Transverse colon (tissue), 4 donors: ENCODE measurements at regions of chr11 and their contacts with region 1.

Region 1: GRCh38 chr11:64152841-64153691 is 12.8 kb downstream of the MACROD1 start:
- DNase-seq: peak; percentile 71
- H3K4me3 ChIP-seq: no peak overlapping the region
- H3K27ac ChIP-seq: no peak overlapping the region
- H3K4me1 ChIP-seq: peaks cover 4 to 15% (median 6%) of the 10 kb centered on the region in 4 donors
- H3K27me3 ChIP-seq: no peaks in the 10 kb centered on the region
- CTCF ChIP-seq: peak; percentile 94 to 100 (median 100)
- EP300 ChIP-seq: no peak
- POLR2A ChIP-seq: no peak

Region 2: GRCh38 chr11:64000026-64000739 is 152.9 kb before region 1 on chr11:
- in situ Hi-C with region 1: loop called (anchors 10 kb)
- intact Hi-C with region 1: loop called (anchors 2 kb)
- DNase-seq: peak; percentile 71
- H3K4me3 ChIP-seq: peak overlapping the region in 3 of 4 donors; percentile 19 to 47 (median 29)
- H3K27ac ChIP-seq: no peak overlapping the region
- H3K4me1 ChIP-seq: peaks cover 18 to 27% (median 20%) of the 10 kb centered on the region in 4 donors
- H3K27me3 ChIP-seq: no peaks in the 10 kb centered on the region
- CTCF ChIP-seq: peak in 4 of 5 experiments; percentile 73 to 90 (median 82)
- EP300 ChIP-seq: no peak
- POLR2A ChIP-seq: no peak

Region 3: GRCh38 chr11:64036087-64037026 is 116.7 kb before region 1 on chr11:
- in situ Hi-C with region 1: no loop called
- intact Hi-C with region 1: loop called (anchors 5 kb)
- DNase-seq: no peak
- H3K4me3 ChIP-seq: peak overlapping the region; percentile 12 to 42 (median 34)
- H3K27ac ChIP-seq: peak overlapping the region; percentile 11 to 72 (median 47)
- H3K4me1 ChIP-seq: peaks cover 0 to 21% (median 15%) of the 10 kb centered on the region in 4 donors
- H3K27me3 ChIP-seq: peaks cover 50% of the 10 kb centered on the region
- CTCF ChIP-seq: no peak
- EP300 ChIP-seq: no peak
- POLR2A ChIP-seq: no peak

Region 4: GRCh38 chr11:64094463-64095260 is 58.4 kb before region 1 on chr11:
- in situ Hi-C with region 1: no loop called
- intact Hi-C with region 1: loop called (anchors 5 kb)
- DNase-seq: peak; percentile 22
- H3K4me3 ChIP-seq: no peak overlapping the region
- H3K27ac ChIP-seq: peak overlapping the region; percentile 52 to 74 (median 66)
- H3K4me1 ChIP-seq: peaks cover 1 to 33% (median 13%) of the 10 kb centered on the region in 4 donors
- H3K27me3 ChIP-seq: no peaks in the 10 kb centered on the region
- CTCF ChIP-seq: no peak
- EP300 ChIP-seq: no peak
- POLR2A ChIP-seq: no peak

Region 5: DNA sequence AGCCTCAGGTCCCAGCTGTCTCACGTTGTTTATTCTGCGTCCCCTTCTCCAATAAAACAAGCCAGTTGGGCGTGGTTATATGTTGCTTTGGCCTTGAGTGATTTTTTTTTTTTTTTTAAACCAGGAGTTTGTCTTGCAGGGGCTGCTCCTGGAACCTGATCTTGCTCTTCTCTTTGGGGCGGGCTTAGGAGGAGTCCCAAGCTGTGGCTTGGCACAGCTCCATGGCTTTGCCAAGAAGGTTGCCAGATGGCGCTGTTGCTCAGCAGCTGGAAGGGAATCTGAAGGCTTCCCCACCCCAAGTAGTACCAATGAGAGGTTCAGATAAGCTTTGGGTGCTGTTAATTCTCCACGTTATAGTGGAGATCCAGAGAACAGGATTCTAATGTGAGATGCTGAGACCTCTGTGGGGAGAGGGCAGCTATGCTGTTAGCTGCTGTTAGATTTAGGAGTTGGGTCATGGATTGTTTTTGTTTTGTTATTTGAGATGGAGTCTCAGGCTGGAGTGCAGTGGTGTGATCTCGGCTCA is 51.5 kb after region 1 on chr11:
- in situ Hi-C with region 1: no loop called
- intact Hi-C with region 1: no loop called
- DNase-seq: peak; percentile 93
- H3K4me3 ChIP-seq: no peak overlapping the region
- H3K27ac ChIP-seq: peak overlapping the region; percentile 73 to 85 (median 80)
- H3K4me1 ChIP-seq: peaks cover 7 to 38% (median 34%) of the 10 kb centered on the region in 4 donors
- H3K27me3 ChIP-seq: no peaks in the 10 kb centered on the region
- CTCF ChIP-seq: peak; percentile 64 to 84 (median 73)
- EP300 ChIP-seq: no peak
- POLR2A ChIP-seq: no peak